Posterior vena cava (tissue), 2 donors: ENCODE measurements at regions of chr18 and their contacts with region 1.

Region 1: DNA sequence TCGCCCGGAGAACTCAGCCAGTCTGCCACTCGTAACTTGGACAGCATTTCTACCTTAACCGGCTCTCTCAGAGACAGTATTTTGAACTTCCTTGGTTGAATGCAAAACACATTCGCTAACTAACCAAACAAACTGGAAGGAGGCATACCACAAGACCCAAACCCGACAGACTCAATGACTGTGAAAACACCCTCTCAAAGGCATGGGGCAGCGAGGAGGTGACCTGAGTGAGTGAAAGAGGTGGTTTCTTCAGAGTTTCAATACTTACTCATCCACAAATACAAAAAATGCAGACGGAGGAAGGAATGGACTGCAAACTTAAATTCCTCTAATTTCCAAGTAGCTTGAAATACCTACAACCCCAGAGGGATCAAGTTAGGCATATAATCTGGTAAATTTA is 132.9 kb downstream of the GAREM1 start:
- DNase-seq: no peak

Region 2: DNA sequence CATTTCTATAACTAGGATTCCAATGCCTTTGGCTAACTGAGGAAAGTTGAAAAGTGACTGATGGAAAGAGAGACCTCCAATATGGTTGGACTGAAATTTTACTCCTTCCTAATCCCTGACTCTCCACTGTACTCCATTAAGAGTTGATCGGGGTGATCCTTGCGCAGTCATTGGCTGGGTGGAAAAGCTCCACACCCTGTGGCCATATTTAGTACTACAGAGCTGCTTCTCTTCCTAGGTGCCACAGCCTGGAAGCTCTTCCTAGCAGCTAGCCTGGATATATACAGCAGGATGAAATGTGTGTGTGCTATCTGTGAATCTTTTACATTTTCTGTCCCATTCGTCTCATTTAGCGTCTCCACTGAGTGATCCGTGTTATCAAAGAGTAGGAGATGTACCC is 76.8 kb before region 1 on chr18:
- intact Hi-C with region 1: no loop called
- DNase-seq: no peak

Region 3: GRCh38 chr18:32381726-32382125 is 43.9 kb after region 1 on chr18:
- intact Hi-C with region 1: loop called in 1 of 2 experiments (anchors 1 kb)
- DNase-seq: no peak